Activated CD4-positive, alpha-beta T cell treated with anti-CD3 and anti-CD28 coated beads, Interleukin-2, amount 10 ng/mL, durations not matched to agents 7 days and 5 days (primary cell): ENCODE measurements at regions of chr10 and their contacts with region 1.

Region 1: DNA sequence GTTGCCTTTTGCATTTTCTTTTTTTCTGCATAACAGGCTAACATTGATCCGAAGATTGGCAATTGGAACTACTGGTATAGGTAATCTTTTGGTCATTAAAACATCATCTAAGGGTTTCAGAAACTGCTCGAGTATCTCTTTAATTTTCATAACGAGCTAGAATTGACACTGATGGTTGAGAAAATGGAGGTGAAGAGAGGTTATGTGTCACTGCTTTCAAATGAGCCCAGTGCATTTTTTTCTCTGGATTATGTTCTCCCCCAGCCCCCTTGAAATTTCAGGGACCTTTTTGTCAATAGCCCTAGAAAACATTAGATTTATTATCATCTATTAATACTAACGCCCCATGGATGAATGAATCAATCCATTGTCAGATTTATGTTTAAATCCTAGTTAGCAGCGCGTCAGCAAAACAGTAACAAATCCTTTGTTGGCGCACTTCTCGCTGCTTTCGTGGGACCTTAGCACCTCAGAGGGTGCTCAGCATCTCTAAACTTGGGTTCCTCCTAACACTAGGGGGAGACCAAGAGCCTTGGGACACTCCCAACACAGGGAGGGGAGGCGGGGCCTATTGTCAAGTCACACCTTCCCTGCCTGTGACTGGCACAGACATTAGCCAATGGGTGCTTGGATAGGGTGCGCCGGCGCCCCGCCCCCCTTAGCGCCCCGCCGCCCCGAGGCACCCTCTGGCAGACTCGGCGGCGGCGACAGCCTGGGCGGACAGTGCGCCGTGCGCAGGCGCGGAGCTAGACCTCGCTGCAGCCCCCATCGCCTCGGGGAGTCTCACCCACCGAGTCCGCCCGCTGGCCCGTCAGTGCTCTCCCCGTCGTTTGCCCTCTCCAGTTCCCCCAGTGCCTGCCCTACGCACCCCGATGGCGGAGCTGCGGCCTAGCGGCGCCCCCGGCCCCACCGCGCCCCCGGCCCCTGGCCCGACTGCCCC is at the start of gene SUFU:
- DNase-seq: peak; percentile 100
- H3K4me3 Mint-ChIP-seq: no peak within 1 kb of the TSS
- H3K27ac Mint-ChIP-seq: peak within 1 kb of the TSS; percentile 87
- H3K4me1 Mint-ChIP-seq: peaks cover 40% of the 10 kb centered on the region
- H3K27me3 Mint-ChIP-seq: no peaks in the 10 kb centered on the region
- total RNA-seq, gene SUFU: 13.4 to 14.2 TPM

Region 2: DNA sequence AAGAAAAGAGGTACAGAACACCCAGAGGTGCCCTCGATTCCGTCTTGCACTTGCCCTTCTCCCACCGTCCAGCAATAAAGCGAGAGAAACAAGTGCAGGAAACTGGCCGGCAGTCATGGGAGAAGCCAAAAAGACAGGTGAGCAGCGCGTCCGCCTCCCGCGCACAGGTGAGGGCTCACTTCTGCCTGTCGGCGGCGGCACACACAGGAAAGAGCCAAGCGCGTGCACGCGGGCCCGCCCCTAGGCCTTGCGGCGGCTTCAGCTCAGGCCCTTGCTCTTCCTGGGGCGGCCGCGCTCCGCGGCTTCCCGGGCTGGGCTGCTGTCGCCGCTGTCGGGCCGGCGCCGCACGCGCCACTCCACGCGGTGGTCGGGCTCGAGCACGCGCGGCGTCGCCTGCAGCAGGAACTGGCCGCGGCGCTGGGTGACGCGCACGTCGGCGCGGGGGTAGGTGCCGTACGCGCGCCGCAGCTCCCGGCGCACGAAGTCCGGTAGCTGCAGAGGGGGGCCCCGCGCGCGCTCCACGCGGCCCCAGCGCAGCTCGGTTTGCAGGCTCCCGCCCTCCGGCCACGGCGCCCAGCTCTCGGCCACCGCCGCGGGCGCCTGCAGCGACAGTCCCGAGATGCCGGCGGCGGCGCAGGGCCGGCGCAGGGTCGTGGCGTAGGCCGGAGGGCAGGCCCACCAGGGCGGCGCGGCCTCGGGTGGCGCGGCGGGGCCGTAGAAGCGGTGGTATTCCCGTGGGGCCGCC is 53.2 kb before region 1 on chr10:
- CTCF ChIA-PET with region 1: interaction called, 10 read pairs
- POLR2A ChIA-PET with region 1: no interaction called
- DNase-seq: peak; percentile 89
- H3K4me3 Mint-ChIP-seq: peak overlapping the region; percentile 86
- H3K27ac Mint-ChIP-seq: peak overlapping the region; percentile 94
- H3K4me1 Mint-ChIP-seq: peaks cover 45% of the 10 kb centered on the region
- H3K27me3 Mint-ChIP-seq: no peaks in the 10 kb centered on the region

Region 3: GRCh38 chr10:102476466-102477141 is 26.9 kb before region 1 on chr10:
- CTCF ChIA-PET with region 1: interaction called, 13 read pairs
- POLR2A ChIA-PET with region 1: interaction called, 6 read pairs
- DNase-seq: no peak
- H3K4me3 Mint-ChIP-seq: no peak overlapping the region
- H3K27ac Mint-ChIP-seq: peak overlapping the region; percentile 69
- H3K4me1 Mint-ChIP-seq: peaks cover 24% of the 10 kb centered on the region
- H3K27me3 Mint-ChIP-seq: no peaks in the 10 kb centered on the region

Region 4: DNA sequence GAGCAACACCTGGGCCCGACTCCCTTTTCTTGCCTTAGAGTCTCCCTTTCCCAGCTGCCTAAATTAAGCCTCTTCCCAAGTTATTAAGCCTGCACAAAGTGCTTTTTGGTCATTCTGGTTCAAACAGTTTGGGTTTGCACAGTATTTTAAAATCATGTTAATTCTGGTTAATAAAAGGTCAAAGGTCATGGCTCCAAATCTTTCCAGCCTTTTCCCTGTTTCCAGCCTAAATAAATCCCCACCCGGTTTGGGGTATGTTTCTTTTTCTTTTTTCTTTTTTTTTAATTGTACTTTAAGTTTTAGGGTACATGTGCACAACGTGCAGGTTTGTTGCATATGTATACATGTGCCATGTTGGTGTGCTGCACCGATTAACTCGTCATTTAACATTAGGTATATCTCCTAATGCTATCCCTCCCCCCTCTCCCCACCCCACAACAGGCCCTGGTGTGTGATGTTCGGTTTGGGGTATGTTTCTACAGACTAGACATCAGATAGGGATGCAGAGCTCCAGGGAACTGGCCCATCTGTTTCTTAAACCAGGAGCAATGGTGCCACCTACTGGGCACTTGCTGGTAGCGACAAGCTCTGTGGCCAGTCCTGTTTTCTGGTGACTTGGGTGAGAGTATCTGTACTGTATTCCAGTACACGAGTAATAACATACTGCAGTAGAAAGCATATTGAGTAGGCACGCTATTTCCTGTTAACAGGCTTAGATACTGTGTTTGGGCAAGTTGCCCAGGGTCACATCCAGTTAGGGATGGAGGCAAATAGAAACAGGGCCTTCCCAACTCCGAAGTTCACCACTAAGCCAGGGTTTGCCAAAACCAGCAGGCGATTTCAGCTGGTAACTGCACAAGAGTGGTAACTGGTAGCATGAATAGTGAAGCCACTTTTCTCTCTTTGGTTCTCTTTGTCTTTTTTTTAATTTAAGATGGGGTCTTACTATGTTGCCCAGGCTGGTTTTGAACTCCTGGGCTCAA is 80.2 kb after region 1 on chr10:
- CTCF ChIA-PET with region 1: interaction called, 36 read pairs
- POLR2A ChIA-PET with region 1: no interaction called
- DNase-seq: peak; percentile 89
- H3K4me3 Mint-ChIP-seq: no peak overlapping the region
- H3K27ac Mint-ChIP-seq: no peak overlapping the region
- H3K4me1 Mint-ChIP-seq: peaks cover 14% of the 10 kb centered on the region
- H3K27me3 Mint-ChIP-seq: no peaks in the 10 kb centered on the region

Region 5: GRCh38 chr10:102645741-102646609 is 142.4 kb after region 1 on chr10:
- CTCF ChIA-PET with region 1: interaction called, 10 read pairs
- POLR2A ChIA-PET with region 1: no interaction called
- DNase-seq: peak; percentile 75
- H3K4me3 Mint-ChIP-seq: peak overlapping the region; percentile 94
- H3K27ac Mint-ChIP-seq: peak overlapping the region; percentile 95
- H3K4me1 Mint-ChIP-seq: peaks cover 55% of the 10 kb centered on the region
- H3K27me3 Mint-ChIP-seq: no peaks in the 10 kb centered on the region